Activated T-helper 2 cell treated with anti-CD3 and anti-CD28 coated beads, Interferon-gamma antibody, Interleukin-2, Interleukin-4, amounts not matched to agents 10 μg/mL and 5 μg/mL and 100 μg/mL, durations not matched to agents 14 hours and 24 hours and 36 hours (primary cell): ENCODE measurements at regions of chr2 and their contacts with region 1.

Region 1: GRCh38 chr2:9753276-9753600 is 90.0 kb upstream of the TAF1B start:
- DNase-seq: peak; percentile 56
- H3K4me3 Mint-ChIP-seq: peak overlapping the region; percentile 77
- H3K27ac Mint-ChIP-seq: peak overlapping the region; percentile 92
- H3K4me1 Mint-ChIP-seq: peaks cover 53% of the 10 kb centered on the region
- H3K27me3 Mint-ChIP-seq: peaks cover 21% of the 10 kb centered on the region

Region 2: GRCh38 chr2:9594366-9595054 is 158.7 kb before region 1 on chr2:
- intact Hi-C with region 1: loop called (anchors 1 kb)
- DNase-seq: no peak
- H3K4me3 Mint-ChIP-seq: peak overlapping the region; percentile 42
- H3K27ac Mint-ChIP-seq: peak overlapping the region; percentile 93
- H3K4me1 Mint-ChIP-seq: peaks cover 57% of the 10 kb centered on the region
- H3K27me3 Mint-ChIP-seq: no peaks in the 10 kb centered on the region

Region 3: DNA sequence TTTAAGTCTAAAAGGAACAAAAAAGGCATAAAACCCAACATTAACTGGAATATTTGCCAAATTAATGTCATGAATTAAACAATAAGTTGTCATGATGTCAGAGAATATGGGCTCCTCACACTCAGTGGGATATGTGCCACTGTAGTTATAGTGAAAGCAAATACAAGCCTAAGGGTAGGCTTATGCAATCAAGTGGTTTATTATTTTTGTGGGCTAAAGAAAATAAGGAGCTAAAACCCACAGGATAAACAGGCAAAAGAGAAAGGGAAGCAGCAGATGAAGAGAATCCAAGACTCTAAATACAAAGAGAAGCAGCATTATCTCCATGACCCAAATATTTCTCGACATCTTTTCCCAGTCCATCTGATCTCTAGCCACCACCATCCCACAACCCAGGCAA is 139.9 kb before region 1 on chr2:
- intact Hi-C with region 1: loop called (anchors 5 kb)
- DNase-seq: no peak
- H3K4me3 Mint-ChIP-seq: no peak overlapping the region
- H3K27ac Mint-ChIP-seq: no peak overlapping the region
- H3K4me1 Mint-ChIP-seq: peaks cover 78% of the 10 kb centered on the region
- H3K27me3 Mint-ChIP-seq: no peaks in the 10 kb centered on the region

Region 4: DNA sequence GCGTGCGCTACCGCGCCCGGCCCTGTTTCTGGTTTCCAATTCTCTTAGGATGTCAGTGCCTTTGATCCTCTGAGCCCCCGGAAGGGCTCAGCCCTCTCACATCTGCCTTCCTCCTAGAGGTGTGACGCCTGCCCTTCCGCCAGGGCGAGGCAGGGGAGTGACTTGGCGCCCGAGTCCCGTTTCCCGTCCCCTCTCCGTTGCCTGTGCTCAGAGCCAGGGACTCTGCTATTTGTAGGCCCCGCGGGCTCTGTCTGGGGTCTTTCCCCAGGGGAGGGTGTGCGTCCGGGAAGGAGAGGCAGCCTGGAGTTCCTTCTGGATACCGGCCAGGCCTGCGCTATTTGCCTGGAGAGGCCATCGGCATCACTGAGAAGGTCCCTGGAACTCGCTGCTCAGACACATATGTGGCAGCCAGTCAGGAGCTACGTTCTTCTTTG is 13.7 kb before region 1 on chr2:
- intact Hi-C with region 1: loop called (anchors 2 kb)
- DNase-seq: no peak
- H3K4me3 Mint-ChIP-seq: peak overlapping the region; percentile 11
- H3K27ac Mint-ChIP-seq: peak overlapping the region; percentile 71
- H3K4me1 Mint-ChIP-seq: peaks cover 41% of the 10 kb centered on the region
- H3K27me3 Mint-ChIP-seq: peaks cover 2% of the 10 kb centered on the region

Region 5: DNA sequence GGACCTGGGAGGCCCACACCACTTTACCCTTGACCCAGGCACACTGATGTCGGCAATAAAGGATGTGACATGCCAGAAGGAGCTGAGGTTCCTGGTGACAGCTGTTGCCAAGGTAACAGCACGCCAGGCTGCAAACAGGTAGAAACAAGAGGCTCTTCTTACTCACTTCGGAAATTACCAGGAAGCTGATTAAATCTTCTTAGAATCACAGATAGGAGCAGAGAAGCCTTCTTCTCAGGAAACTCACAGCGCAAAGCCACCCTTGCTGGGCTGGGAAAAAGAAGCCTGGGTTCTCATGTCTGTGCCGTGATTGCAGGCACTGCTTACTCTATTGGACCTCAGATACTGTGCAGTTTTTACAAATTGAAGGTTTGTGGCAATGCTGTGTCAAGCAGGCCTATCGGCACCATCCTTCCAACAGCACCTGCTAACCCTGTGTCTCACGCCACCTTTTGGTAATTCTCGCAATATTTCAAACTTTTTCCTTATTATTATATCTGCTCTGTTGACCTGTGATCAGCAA is 29.0 kb after region 1 on chr2:
- intact Hi-C with region 1: loop called (anchors 1 kb)
- DNase-seq: peak; percentile 82
- H3K4me3 Mint-ChIP-seq: peak overlapping the region; percentile 66
- H3K27ac Mint-ChIP-seq: peak overlapping the region; percentile 99
- H3K4me1 Mint-ChIP-seq: peaks cover 67% of the 10 kb centered on the region
- H3K27me3 Mint-ChIP-seq: no peaks in the 10 kb centered on the region